Gastrocnemius medialis (tissue), 4 donors: ENCODE measurements at regions of chr11 and their contacts with region 1.

Region 1: DNA sequence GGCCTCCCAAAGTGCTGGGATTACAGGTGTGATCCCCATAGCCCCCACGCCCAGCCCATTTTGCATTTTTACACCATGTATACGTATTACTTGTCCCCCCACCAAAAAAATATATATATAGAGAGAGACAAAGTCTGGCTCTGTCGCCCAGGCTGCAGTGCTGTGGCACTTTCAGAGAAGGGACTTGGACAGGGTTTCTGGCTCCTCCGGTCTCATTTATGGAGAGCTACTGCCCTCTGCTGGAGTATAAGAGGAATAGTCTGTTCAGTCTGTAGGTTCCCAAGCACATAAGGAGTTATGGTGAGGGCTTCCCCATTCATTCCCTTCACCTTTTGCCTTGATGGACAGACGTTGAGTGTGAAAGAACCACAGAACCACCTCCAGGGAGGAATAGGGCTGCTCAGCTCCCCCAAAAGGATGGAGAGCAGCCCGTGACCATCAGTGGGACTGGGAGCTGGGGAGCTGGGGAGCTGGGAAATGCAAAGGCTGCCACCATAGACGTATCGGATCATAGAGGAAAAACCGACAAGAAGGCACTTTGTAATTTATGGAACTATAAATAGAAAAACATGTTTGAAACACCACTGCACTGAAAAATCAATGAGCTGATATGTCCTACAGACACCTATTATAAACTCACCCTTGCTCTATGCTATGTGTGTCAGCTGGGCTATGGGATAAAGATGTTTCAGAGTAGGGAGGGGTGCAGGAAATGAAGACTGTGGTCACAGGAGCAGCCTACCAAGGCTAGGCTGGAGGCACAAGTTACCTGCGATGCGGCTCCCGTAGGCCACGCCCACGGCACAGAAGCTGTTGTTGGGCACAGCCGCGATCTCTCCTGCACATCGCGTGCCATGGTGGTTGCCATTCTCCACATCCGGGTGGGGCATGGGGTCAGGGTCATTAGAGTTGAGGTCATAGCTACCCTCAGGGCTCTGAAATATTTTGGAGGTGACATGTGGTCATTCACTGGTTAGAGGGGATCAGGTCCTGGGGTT is 5.2 kb downstream of the PCSK7 start:
- DNase-seq: peak; percentile 32 to 67
- ATAC-seq: peak; percentile 78 to 80
- H3K4me3 ChIP-seq: no peak overlapping the region
- H3K27ac ChIP-seq: no peak overlapping the region
- H3K4me1 ChIP-seq: peaks cover 25 to 36% of the 10 kb centered on the region in 2 donors
- H3K27me3 ChIP-seq: no peaks in the 10 kb centered on the region
- CTCF ChIP-seq: peak; percentile 78 to 85 (median 82)
- POLR2A ChIP-seq: no peak

Region 2: DNA sequence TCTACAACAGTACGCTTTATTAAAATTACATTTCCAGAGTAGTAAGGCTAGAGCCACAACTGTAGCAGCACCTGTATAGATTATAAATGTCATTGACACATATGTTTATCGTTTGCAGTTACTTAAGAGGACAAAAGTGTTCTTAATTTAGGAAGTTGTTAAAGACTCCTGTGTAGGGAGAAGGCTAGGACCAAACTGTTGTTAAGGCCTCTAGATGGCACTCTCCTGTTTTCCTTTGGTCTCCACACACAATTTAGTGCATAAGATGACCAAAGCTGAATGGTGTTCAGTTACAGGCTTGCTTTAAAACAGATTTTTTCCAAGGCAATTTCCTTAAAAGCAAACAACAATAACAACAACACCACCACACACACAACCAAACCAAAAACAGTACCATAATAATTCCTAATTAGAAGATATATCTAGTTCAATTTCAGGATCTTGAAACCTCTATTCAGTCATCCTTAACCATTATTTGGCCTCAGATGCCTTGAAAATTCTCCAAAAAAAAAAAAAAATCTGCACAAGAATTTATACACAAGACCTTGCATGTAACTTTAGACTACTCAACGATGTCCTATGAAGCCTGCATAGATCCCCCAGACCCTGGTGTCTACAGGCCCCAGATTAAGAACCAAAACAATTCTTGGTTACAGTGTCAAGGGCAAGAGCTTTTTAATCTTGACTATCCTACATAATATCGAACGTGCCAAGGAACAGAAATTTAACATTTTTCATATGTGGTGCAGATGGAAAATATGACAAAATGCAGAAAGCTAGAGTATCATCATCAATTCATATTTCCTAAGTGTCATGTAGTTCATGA is 346.7 kb before region 1 on chr11:
- in situ Hi-C with region 1: loop called (anchors 10 to 25 kb)
- intact Hi-C with region 1: loop called (anchors 1 kb)
- DNase-seq: no peak
- ATAC-seq: peak; percentile 46 to 78
- H3K4me3 ChIP-seq: no peak overlapping the region
- H3K27ac ChIP-seq: no peak overlapping the region
- H3K4me1 ChIP-seq: peaks cover 12 to 16% of the 10 kb centered on the region in 2 donors
- H3K27me3 ChIP-seq: no peaks in the 10 kb centered on the region
- CTCF ChIP-seq: peak; percentile 44 to 70 (median 51)
- POLR2A ChIP-seq: no peak

Region 3: DNA sequence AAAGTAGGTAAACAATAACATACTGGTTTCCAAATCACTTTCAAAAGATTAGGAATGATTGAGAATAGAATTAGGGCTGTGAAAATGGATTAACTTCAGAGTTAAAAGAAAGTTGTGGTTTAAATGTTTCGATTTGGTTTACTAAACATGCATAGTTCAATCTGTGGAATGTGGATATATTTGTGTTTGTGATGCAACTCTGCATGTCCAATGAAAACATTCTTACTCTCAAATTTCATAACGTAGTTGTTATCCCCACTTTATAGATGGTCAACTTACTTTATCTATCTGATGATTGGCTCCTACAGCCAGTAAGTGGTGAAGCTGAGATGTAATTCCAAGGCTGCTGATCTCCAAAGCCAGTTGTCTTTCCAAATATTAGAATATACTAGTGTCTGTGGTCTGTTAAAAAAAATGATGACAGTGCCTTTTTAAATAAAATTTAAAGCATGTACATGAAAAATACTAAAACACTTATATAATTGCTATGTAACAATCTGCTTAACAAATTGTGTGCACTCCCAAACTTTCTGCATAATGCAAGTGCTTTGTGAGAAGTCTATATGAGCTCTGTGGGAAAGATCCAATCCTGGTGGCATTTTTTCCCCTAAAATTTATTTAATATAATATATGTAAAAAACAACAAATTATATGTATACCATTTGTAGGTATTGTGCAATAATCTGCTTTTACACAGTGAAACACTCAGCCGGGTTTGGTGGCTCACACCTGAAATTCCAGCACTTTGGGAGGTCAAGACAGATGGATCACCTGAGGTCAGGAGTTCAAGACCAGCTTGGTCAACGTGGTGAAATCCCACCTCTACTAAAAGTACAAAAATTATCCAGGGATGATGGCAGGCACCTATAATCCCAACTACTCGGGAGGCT is 118.7 kb before region 1 on chr11:
- in situ Hi-C with region 1: loop called in 2 of 4 experiments (anchors 10 kb)
- intact Hi-C with region 1: no loop called
- DNase-seq: no peak
- ATAC-seq: no peak
- H3K4me3 ChIP-seq: no peak overlapping the region
- H3K27ac ChIP-seq: no peak overlapping the region
- H3K4me1 ChIP-seq: no peaks in the 10 kb centered on the region
- H3K27me3 ChIP-seq: no peaks in the 10 kb centered on the region
- CTCF ChIP-seq: no peak
- POLR2A ChIP-seq: no peak

Region 4: DNA sequence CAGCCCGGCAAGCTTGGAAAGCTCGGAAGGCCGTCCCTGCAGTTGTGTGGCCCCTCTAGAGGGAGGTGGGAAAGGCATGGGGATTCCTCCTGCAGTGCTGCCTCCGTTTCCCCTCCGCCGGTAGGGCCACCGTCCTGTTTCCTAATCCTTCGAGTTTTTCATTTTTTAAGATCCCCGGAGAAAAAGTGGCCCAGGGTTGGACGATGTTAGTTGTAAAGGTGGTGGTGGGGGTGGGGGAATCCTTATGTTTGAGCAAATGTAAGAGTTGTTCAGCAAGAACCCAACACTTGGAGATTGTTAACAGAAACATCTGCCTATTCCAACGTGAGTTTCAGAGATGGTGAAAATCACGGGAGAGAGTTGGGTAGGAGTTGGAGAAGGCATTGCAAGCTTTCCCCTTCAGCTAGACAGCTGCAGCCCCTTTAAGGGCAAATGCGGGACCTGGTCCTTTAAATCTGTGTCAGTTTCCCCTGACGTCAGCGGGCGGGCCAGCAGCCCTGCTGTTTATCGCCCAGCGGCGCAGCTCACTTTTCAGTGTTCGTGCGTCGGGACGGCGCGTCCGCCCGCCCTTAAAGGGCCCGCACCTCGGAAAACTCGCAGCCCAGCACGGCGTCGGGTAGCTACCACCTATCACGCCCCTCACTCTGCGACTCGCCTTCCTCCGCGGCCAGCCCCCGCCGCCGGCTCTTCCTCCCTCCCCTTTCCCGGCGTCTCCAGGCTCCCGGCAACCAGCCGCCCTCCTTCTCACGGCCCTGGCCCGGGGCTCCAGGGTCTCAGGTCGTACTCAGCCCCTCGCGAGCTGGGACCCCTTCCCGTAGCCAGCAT is 48.3 kb before region 1 on chr11 and contains the start of gene SIDT2:
- in situ Hi-C with region 1: loop called in 2 of 4 experiments (anchors 5 kb)
- intact Hi-C with region 1: loop called (anchors 1 kb)
- DNase-seq: peak; percentile 91 to 93
- ATAC-seq: peak; percentile 81 to 90
- H3K4me3 ChIP-seq: peak within 1 kb of the TSS; percentile 62 to 98 (median 74)
- H3K27ac ChIP-seq: peak within 1 kb of the TSS; percentile 88 to 99 (median 89)
- H3K4me1 ChIP-seq: peaks cover 26 to 33% of the 10 kb centered on the region in 2 donors
- H3K27me3 ChIP-seq: no peaks in the 10 kb centered on the region
- CTCF ChIP-seq: peak in 1 of 5 experiments; percentile 26
- POLR2A ChIP-seq: peak; percentile 84 to 95
- total RNA-seq, gene SIDT2: 14.3 to 33.9 (median 17.7) TPM

Region 5: DNA sequence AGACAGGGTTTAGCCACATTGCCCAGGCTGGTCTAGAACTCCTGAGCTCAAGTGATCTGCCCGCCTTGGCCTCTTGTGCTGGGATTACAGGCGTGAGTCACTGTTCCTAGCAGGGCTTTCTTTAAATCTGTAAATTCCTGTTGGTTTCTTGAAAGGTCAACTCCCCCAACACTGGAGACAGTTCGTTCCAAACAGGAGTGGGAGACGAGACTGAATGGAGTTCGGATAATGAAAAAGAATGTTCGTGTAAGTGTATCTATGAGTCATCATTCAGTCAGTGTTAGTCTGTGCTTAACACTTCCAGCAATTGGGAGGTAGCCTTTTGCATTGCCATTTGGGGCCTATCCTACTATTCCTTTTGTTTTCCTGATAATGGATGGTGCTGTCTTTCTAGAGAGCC is 54.5 kb after region 1 on chr11:
- in situ Hi-C with region 1: no loop called
- intact Hi-C with region 1: no loop called
- DNase-seq: no peak
- ATAC-seq: no peak
- H3K4me3 ChIP-seq: no peak overlapping the region
- H3K27ac ChIP-seq: no peak overlapping the region
- H3K4me1 ChIP-seq: no peaks in the 10 kb centered on the region
- H3K27me3 ChIP-seq: no peaks in the 10 kb centered on the region
- CTCF ChIP-seq: no peak
- POLR2A ChIP-seq: no peak